ENCODE measurements at regions of chr6 and their contacts with region 1.

Region 1: GRCh38 chr6:106979427-106979884 is 4.9 kb upstream of the CD24 start:
- DNase-seq: peak; percentile 58 to 68 (median 62)
- H3K4me3 ChIP-seq: no peak overlapping the region
- H3K4me3 Mint-ChIP-seq: no peak overlapping the region
- H3K27ac ChIP-seq: no peak overlapping the region
- H3K27ac Mint-ChIP-seq: no peak overlapping the region
- H3K4me1 ChIP-seq: peaks cover 7% of the 10 kb centered on the region
- H3K4me1 Mint-ChIP-seq: peaks cover 0 to 9% (median 5%) of the 10 kb centered on the region in 4 donors
- H3K27me3 ChIP-seq: peaks cover 3% of the 10 kb centered on the region
- H3K27me3 Mint-ChIP-seq: peaks cover 22 to 23% of the 10 kb centered on the region in 2 donors

Region 2: GRCh38 chr6:105431226-105431625 is 1548.2 kb before region 1 on chr6:
- CTCF ChIA-PET with region 1: interaction called, 10 read pairs
- POLR2A ChIA-PET with region 1: no interaction called
- intact Hi-C with region 1: no loop called
- DNase-seq: peak in 4 of 5 donors; percentile 35 to 49 (median 42)
- H3K4me3 ChIP-seq: no peak overlapping the region
- H3K4me3 Mint-ChIP-seq: no peak overlapping the region
- H3K27ac ChIP-seq: no peak overlapping the region
- H3K27ac Mint-ChIP-seq: no peak overlapping the region
- H3K4me1 ChIP-seq: no peaks in the 10 kb centered on the region
- H3K4me1 Mint-ChIP-seq: no peaks in the 10 kb centered on the region
- H3K27me3 ChIP-seq: no peaks in the 10 kb centered on the region
- H3K27me3 Mint-ChIP-seq: peaks cover 0 to 2% of the 10 kb centered on the region in 2 donors

Region 3: DNA sequence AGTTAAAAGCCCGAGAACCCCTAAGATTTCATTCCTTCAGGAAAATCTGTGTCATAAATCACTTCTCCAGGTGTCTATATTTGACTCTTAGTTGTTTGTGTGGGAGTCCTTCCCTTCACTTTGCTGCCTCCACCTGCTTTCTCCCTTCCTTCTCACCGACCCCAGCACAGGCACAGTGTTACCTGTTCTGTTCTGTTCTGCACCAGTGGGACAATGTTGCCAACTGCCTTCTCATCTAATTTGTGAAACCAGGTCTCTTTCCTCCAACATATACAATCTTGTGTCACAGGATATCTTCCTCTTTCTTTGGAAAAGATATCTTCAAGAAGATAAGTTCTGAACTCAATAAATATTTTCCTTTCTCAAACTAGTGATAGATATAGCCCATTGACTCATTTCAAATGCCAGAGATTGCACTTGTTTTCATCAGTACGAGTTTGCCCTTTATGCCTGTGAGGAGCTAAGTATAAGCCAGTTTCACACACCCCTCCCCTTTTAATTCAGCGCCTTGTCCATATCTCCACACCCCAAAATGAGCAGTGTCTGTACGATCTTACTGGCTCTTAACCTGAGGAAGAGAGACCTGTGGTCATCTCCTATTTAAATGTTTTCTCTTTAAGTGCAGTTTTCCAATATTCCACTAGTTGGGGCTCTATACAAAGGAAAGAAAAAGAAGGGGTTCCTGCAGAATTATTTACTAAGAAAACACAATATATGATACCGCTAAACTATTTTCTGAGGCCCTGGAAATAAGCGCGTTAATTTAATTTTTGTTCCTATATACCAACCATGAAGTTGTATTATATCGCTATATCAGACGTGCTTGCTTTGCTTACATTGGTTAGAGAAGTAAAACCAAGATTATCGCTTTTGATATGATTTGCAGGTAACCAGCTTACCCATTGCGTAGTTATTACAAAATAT is 1495.0 kb before region 1 on chr6:
- CTCF ChIA-PET with region 1: no interaction called
- POLR2A ChIA-PET with region 1: no interaction called
- intact Hi-C with region 1: loop called (anchors 2 kb)
- DNase-seq: peak in 4 of 5 donors; percentile 34 to 55 (median 44)
- H3K4me3 ChIP-seq: no peak overlapping the region
- H3K4me3 Mint-ChIP-seq: peak overlapping the region; percentile 20 to 71 (median 62)
- H3K27ac ChIP-seq: no peak overlapping the region
- H3K27ac Mint-ChIP-seq: peak overlapping the region in 6 of 7 donors; percentile 7 to 76 (median 60)
- H3K4me1 ChIP-seq: peaks cover 32% of the 10 kb centered on the region
- H3K4me1 Mint-ChIP-seq: peaks cover 13 to 34% (median 18%) of the 10 kb centered on the region in 4 donors
- H3K27me3 ChIP-seq: no peaks in the 10 kb centered on the region
- H3K27me3 Mint-ChIP-seq: no peaks in the 10 kb centered on the region

Region 4: DNA sequence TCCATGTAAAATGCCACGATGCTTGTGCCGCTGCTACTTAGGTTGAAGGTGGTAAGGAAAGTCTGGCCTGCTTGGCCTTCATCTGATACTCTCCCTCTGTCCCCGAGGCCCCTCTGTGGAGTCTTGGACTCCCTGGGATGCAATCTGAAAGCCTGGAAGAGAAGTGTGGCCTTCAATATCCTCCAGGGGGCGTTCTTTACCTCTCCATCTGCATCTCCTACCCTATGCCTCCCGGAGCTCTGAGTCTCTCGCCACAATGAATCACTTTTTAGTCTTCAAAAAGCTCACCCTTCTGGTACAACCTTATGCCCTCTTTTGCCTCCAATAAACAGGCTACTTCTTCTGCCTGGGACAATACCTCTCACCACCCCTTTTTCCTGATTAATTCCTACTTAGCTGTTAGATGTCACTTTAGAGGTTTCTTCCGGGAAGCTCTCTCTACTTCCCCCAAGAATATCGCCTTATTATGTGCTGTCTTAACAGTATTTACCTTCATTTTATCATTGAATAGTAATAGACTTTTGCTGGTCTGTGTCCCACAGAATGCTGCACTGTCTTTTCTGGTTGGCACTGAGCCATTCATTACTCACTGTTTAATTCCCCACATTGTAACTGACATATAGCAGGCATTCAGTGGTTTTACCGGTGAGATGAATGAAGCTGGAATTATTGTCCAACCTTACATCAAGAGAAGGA is 640.0 kb before region 1 on chr6:
- CTCF ChIA-PET with region 1: interaction called, 22 read pairs
- POLR2A ChIA-PET with region 1: no interaction called
- intact Hi-C with region 1: loop called (anchors 1 kb)
- DNase-seq: peak; percentile 28 to 54 (median 44)
- H3K4me3 ChIP-seq: no peak overlapping the region
- H3K4me3 Mint-ChIP-seq: peak overlapping the region in 7 of 8 donors; percentile 4 to 49 (median 29)
- H3K27ac ChIP-seq: no peak overlapping the region
- H3K27ac Mint-ChIP-seq: peak overlapping the region in 2 of 7 donors; percentile 42 to 54
- H3K4me1 ChIP-seq: peaks cover 5% of the 10 kb centered on the region
- H3K4me1 Mint-ChIP-seq: peaks cover 0 to 6% (median 3%) of the 10 kb centered on the region in 4 donors
- H3K27me3 ChIP-seq: no peaks in the 10 kb centered on the region
- H3K27me3 Mint-ChIP-seq: peaks cover 12 to 23% of the 10 kb centered on the region in 2 donors

Region 5: GRCh38 chr6:106360410-106360988 is 619.0 kb before region 1 on chr6 and contains the start of gene CRYBG1:
- CTCF ChIA-PET with region 1: interaction called, 5 read pairs
- POLR2A ChIA-PET with region 1: no interaction called
- intact Hi-C with region 1: loop called (anchors 1 kb)
- DNase-seq: peak; percentile 73 to 77 (median 75)
- H3K4me3 ChIP-seq: peak within 1 kb of the TSS; percentile 3 to 52
- H3K4me3 Mint-ChIP-seq: peak within 1 kb of the TSS; percentile 79 to 89 (median 86)
- H3K27ac ChIP-seq: no peak within 1 kb of the TSS
- H3K27ac Mint-ChIP-seq: peak within 1 kb of the TSS in 3 of 7 donors; percentile 15 to 78 (median 53)
- H3K4me1 ChIP-seq: peaks cover 17% of the 10 kb centered on the region
- H3K4me1 Mint-ChIP-seq: peaks cover 4 to 11% (median 9%) of the 10 kb centered on the region in 4 donors
- H3K27me3 ChIP-seq: peaks cover 9% of the 10 kb centered on the region
- H3K27me3 Mint-ChIP-seq: peaks cover 15 to 28% of the 10 kb centered on the region in 2 donors
- total RNA-seq, gene CRYBG1: 45.4 to 47.1 TPM

Region 6: GRCh38 chr6:106608062-106608668 is 371.3 kb before region 1 on chr6:
- CTCF ChIA-PET with region 1: interaction called, 4 read pairs
- POLR2A ChIA-PET with region 1: no interaction called
- intact Hi-C with region 1: loop called (anchors 1 kb)
- DNase-seq: peak in 4 of 5 donors; percentile 31 to 47 (median 37)
- H3K4me3 ChIP-seq: no peak overlapping the region
- H3K4me3 Mint-ChIP-seq: no peak overlapping the region
- H3K27ac ChIP-seq: no peak overlapping the region
- H3K27ac Mint-ChIP-seq: peak overlapping the region in 1 of 7 donors; percentile 0
- H3K4me1 ChIP-seq: no peaks in the 10 kb centered on the region
- H3K4me1 Mint-ChIP-seq: peaks cover 0 to 5% (median 1%) of the 10 kb centered on the region in 4 donors
- H3K27me3 ChIP-seq: no peaks in the 10 kb centered on the region
- H3K27me3 Mint-ChIP-seq: no peaks in the 10 kb centered on the region

Region 7: GRCh38 chr6:107114213-107114905 is 134.9 kb after region 1 on chr6:
- CTCF ChIA-PET with region 1: interaction called, 5 read pairs
- POLR2A ChIA-PET with region 1: no interaction called
- intact Hi-C with region 1: loop called (anchors 5 kb)
- DNase-seq: peak; percentile 58 to 77 (median 68)
- H3K4me3 ChIP-seq: peak overlapping the region in 1 of 2 donors; percentile 23
- H3K4me3 Mint-ChIP-seq: peak overlapping the region; percentile 76 to 89 (median 82)
- H3K27ac ChIP-seq: no peak overlapping the region
- H3K27ac Mint-ChIP-seq: peak overlapping the region in 4 of 7 donors; percentile 61 to 81 (median 70)
- H3K4me1 ChIP-seq: peaks cover 19% of the 10 kb centered on the region
- H3K4me1 Mint-ChIP-seq: peaks cover 8 to 18% (median 13%) of the 10 kb centered on the region in 4 donors
- H3K27me3 ChIP-seq: peaks cover 5% of the 10 kb centered on the region
- H3K27me3 Mint-ChIP-seq: peaks cover 3 to 5% of the 10 kb centered on the region in 2 donors

Region 8: DNA sequence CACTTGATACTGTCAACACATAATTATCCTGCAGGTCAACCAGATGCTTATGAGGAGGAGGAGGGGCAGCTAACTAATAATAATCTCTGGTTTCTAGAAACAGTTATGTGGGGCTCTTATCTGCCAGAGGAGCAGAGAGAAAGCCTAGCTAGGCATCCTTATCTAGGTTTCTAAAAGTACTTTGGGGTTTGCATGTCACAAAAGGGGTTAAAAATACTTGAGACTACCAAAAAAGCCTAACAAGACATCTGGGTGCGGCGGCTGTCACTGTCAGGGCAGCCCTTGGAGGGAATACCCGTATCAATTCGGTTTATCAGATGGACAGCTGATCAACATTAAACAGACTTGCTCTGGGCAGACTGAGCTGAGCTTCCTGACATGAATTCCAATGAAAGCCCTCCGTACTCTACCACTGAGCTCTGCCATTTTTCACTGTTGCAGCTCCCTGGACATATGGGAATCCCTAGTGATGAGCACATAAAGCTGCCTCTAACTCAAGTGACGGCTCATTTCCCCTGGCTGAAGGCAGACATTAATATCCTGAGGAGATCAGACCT is 313.3 kb after region 1 on chr6:
- CTCF ChIA-PET with region 1: no interaction called
- POLR2A ChIA-PET with region 1: no interaction called
- intact Hi-C with region 1: no loop called
- DNase-seq: no peak
- H3K4me3 ChIP-seq: no peak overlapping the region
- H3K4me3 Mint-ChIP-seq: no peak overlapping the region
- H3K27ac ChIP-seq: no peak overlapping the region
- H3K27ac Mint-ChIP-seq: no peak overlapping the region
- H3K4me1 ChIP-seq: no peaks in the 10 kb centered on the region
- H3K4me1 Mint-ChIP-seq: peaks cover 0 to 12% (median 4%) of the 10 kb centered on the region in 4 donors
- H3K27me3 ChIP-seq: no peaks in the 10 kb centered on the region
- H3K27me3 Mint-ChIP-seq: no peaks in the 10 kb centered on the region

Measured in CD4-positive, alpha-beta memory T cell (primary cell).